ENCODE measurements at regions of chr14 and their contacts with region 1.

Region 1: GRCh38 chr14:100677554-100678468 is 48.9 kb upstream of the DLK1 start:
- DNase-seq: peak; percentile 54 to 81 (median 68)
- H3K4me3 ChIP-seq: peak overlapping the region in 3 of 7 experiments; percentile 2 to 22 (median 11)
- H3K27ac ChIP-seq: peak overlapping the region in 1 of 2 experiments; percentile 65
- H3K4me1 ChIP-seq: peaks cover 3 to 86% (median 64%) of the 10 kb centered on the region in 4 experiments
- H3K27me3 ChIP-seq: no peaks in the 10 kb centered on the region

Region 2: GRCh38 chr14:100362311-100362927 is 315.4 kb before region 1 on chr14:
- CTCF ChIA-PET with region 1: no interaction called
- POLR2A ChIA-PET with region 1: no interaction called
- DNase-seq: no peak
- H3K4me3 ChIP-seq: no peak overlapping the region
- H3K27ac ChIP-seq: no peak overlapping the region
- H3K4me1 ChIP-seq: no peaks in the 10 kb centered on the region
- H3K27me3 ChIP-seq: no peaks in the 10 kb centered on the region

Region 3: DNA sequence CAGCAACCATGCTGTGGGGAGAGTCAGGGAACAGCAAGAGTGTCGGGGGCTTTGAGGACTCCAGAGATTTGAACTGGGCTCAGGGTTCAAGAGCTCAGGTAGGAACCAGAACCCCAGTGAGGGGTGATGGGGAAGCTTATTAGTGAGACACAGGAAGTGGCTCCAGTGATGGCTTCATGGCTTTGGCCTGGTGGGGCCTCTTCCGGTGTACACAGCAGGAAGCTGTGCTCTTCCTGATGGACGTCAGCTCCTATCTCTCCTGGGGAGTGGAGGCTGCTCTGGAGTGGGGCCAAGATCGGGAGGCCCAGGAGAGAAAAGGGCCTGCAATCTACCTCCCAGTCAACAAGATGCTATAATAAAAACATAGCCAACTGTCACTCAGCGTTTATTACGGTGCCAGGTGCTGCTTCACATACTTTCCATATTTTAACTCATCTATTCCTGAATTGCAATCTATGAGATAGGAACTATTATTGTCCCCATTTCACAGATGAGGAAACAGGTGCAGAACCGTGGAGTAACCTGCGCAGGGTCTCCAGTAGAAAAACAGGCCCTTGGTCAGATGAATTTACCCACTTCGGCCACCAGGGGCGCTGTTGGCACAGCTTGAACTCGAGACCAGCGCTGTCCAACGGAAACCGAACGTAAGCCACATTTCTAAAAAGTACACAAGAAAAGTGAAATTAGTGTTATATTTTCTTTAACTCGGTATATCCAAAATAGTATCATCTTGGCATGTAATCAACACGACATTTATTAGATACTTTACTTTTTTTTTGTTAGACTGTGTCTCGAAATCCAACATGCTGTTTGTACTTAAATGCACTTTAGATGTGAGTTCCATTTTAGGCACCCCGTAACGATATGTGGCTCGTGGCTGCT is 14.7 kb before region 1 on chr14:
- CTCF ChIA-PET with region 1: interaction called, 20 read pairs
- POLR2A ChIA-PET with region 1: interaction called, 3 read pairs
- DNase-seq: peak; percentile 66 to 89 (median 88)
- H3K4me3 ChIP-seq: no peak overlapping the region
- H3K27ac ChIP-seq: no peak overlapping the region
- H3K4me1 ChIP-seq: peaks cover 0 to 18% (median 12%) of the 10 kb centered on the region in 4 experiments
- H3K27me3 ChIP-seq: no peaks in the 10 kb centered on the region

Region 4: DNA sequence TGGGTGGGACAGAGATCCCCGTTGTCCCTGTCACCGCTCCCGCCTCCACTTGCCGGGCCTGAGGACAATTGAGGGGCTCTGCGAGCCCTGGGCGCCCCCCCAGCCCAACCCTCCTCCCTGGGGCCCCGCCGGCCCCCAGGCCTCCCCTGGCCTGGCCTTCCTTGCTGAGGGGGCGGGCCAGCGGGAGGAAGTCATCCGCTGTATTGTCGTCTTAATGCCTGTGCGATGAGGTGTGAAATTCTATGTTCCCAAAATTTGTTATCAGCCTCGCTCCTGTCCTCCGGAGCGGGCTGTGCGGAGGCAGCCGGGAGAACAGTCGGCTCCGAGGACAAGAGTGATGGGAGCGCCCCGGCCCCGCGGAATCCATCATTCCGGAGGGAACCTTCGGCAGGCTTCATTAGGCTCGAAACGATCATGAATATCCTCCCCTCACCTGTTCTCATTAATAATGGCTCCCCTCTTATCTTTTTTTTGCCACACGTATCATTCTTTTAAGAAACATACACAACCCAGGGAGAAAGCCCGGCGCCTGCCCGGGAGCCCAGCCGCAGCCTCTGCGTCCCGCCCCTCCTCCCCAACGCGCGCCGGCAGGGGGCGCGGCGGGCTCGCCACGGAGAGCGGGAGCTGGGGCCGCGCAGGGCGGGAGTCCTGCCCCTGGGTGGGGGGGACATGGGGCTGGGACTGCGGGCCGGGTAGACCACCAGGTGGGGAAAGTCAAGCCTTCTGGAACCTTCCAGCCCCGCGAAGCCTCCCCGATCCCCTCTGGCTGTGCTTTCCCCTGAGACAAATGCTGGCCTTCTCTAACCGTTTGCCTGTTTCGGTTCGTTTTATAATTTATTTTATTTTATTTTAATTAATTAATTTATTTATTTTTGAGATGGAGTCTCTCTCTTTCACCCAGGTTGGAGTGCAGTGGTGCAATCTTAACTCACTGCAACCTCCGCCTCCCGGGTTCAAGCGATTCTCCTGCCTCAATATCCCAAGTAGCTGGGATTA is 31.8 kb after region 1 on chr14:
- CTCF ChIA-PET with region 1: interaction called, 10 read pairs
- POLR2A ChIA-PET with region 1: interaction called, 3 read pairs
- DNase-seq: peak; percentile 42 to 59 (median 48)
- H3K4me3 ChIP-seq: peak overlapping the region in 3 of 7 experiments; percentile 8 to 57 (median 26)
- H3K27ac ChIP-seq: no peak overlapping the region
- H3K4me1 ChIP-seq: peaks cover 2 to 64% (median 50%) of the 10 kb centered on the region in 4 experiments
- H3K27me3 ChIP-seq: no peaks in the 10 kb centered on the region

Region 5: DNA sequence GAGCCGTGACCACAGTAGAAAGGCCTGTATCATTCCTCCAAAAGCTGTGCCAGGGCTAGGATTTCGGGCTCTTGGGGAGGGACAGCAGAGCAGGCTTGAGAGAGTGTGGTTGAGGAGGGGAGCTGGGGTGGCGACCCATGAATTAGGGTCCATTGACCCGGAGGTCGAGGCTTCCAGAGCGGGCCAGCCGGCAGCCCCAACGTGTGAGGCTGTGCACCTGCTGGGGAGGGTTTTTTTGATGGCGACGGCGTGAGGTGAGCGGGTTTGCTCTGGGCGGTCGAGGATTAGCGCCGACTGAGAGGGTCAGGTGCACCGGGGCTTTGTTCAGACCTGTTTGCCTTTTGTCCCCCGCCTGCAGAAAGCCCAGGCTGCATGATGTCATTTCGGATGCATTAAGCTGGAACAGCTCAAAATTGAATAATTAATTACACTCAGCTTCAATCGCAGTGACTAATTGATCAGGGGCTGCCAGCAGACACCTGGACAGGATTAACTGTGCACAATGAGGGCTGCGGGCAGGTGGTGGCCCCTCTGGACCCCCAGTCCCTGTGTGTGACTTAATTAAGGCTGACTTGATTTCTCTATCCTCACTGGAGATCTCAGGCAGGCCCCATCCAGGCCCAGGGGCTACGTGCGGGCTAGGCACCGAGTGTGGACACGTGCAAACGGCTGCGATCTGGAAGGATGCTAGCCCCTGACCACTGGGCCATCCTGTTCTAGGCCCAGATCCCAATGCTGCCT is 106.0 kb after region 1 on chr14:
- CTCF ChIA-PET with region 1: no interaction called
- POLR2A ChIA-PET with region 1: no interaction called
- DNase-seq: no peak
- H3K4me3 ChIP-seq: no peak overlapping the region
- H3K27ac ChIP-seq: no peak overlapping the region
- H3K4me1 ChIP-seq: peaks cover 0 to 14% (median 8%) of the 10 kb centered on the region in 4 experiments
- H3K27me3 ChIP-seq: no peaks in the 10 kb centered on the region

Region 6: DNA sequence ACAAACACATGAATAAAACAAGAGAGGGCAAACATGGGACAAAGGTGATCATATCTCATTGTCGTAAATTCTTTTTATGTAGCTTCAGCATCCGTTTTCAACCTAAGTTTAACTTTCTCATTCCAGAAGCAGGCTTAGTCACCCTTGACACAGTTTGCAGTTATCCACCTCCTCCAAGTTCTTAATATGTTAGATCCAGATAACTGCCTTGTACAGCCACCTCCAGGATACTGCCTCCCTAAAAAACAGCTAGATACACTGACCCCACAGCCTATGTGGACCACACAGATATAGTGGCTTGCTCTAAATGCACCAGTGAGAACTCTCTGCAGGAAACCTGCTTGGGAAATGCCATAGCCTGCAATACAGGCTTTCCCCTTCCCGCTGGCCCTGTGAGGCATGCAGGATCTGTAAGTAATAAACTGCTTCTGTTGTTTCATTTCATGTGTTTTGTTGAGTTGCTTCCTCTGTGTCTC is 236.8 kb after region 1 on chr14:
- CTCF ChIA-PET with region 1: no interaction called
- POLR2A ChIA-PET with region 1: no interaction called
- DNase-seq: no peak
- H3K4me3 ChIP-seq: no peak overlapping the region
- H3K27ac ChIP-seq: no peak overlapping the region
- H3K4me1 ChIP-seq: no peaks in the 10 kb centered on the region
- H3K27me3 ChIP-seq: no peaks in the 10 kb centered on the region